ENCODE measurements at regions of chr3 and their contacts with region 1.

Region 1: GRCh38 chr3:5035692-5036391 is 56.6 kb downstream of the BHLHE40 start:
- DNase-seq: no peak
- ATAC-seq: no peak

Region 2: GRCh38 chr3:4712143-4712542 is 323.7 kb before region 1 on chr3:
- intact Hi-C with region 1: loop called (anchors 10 kb)
- DNase-seq: no peak
- ATAC-seq: peak; percentile 71